Heart right ventricle (tissue), 16 donors: ENCODE measurements at regions of chr3 and their contacts with region 1.

Region 1: DNA sequence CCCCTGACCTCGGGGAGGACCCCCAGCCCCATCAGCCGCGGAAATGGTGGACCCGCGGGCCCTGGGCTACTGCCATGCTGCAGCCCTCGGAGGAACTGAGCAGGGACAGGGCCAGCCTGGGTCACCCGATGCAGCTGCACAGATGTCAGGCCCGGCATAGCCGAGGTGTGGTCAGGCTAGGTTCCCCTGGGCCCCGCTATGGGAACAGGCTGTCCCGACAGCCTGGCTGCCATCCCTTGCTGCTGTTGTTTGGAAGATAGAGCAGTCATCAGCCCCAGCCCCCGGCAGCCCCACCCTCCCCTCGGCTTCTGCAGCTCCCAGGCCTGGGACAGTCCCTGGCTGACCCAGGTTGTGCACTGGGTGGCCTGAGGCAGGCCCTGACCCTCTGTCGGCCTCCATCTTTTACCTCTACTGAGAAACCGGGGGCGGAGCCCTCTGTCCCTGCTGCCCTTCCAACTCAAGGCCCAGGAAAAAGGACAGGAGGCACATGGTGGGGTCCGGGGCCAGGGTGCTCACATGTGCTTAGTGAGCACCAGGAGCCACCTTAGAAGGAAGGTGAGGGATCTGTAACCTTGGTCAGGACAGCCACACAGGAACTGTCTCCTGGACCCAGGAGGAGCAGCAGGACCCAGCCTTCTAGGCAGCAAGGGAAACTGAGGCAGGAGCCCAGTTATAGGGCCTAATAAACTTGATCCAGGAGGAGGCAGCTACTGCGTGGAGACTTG is 31.5 kb upstream of the FBLN2 start:
- DNase-seq: peak; percentile 56 to 86
- ATAC-seq: peak; percentile 46 to 89 (median 80)
- H3K4me3 ChIP-seq: no peak overlapping the region
- H3K27ac ChIP-seq: peak overlapping the region in 9 of 10 donors; percentile 58 to 90 (median 79)
- H3K4me1 ChIP-seq: peaks cover 23 to 46% (median 33%) of the 10 kb centered on the region in 9 donors
- H3K27me3 ChIP-seq: no peaks in the 10 kb centered on the region
- CTCF ChIP-seq: no peak

Region 2: DNA sequence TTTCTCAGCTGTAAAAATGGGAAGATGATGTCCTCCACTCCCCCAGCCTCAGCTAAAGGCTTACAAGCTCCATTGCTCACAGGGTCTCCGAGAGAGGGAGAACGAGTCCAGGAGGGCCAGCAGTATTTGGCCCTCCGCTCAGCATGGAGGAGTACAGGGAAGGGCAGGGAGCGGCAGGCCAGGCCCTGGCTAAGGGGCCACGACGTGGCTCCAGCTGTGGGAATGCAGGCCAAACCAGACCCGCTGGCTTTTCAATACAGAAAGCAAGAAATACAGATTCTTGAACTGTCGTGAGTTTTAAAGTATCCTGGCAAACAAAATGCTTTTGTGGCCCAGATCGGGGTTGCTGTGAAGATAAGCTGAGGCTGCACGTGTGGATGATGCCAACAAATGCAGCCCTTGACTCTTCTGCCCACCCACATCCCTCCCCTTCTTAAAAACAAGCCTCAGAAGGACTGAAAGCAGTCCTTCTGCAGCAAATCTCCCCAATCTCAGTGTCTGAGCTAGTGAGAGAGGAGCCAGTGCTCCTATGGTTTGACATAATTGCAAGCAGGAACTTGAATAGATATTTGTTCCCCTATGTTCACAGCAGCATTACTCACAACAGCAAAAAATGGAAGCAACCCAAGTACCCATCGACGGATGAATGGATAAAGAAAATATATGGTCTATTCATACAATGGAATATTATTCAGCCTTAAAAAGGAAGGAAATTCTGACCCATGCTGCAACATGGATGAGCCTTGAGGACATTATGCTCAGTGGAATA is 13.0 kb after region 1 on chr3:
- intact Hi-C with region 1: loop called in 1 of 10 experiments (anchors 1 kb)
- DNase-seq: no peak
- ATAC-seq: no peak
- H3K4me3 ChIP-seq: no peak overlapping the region
- H3K27ac ChIP-seq: peak overlapping the region in 6 of 10 donors; percentile 9 to 55 (median 26)
- H3K4me1 ChIP-seq: peaks cover 0 to 45% (median 10%) of the 10 kb centered on the region in 9 donors
- H3K27me3 ChIP-seq: no peaks in the 10 kb centered on the region
- CTCF ChIP-seq: no peak

Region 3: DNA sequence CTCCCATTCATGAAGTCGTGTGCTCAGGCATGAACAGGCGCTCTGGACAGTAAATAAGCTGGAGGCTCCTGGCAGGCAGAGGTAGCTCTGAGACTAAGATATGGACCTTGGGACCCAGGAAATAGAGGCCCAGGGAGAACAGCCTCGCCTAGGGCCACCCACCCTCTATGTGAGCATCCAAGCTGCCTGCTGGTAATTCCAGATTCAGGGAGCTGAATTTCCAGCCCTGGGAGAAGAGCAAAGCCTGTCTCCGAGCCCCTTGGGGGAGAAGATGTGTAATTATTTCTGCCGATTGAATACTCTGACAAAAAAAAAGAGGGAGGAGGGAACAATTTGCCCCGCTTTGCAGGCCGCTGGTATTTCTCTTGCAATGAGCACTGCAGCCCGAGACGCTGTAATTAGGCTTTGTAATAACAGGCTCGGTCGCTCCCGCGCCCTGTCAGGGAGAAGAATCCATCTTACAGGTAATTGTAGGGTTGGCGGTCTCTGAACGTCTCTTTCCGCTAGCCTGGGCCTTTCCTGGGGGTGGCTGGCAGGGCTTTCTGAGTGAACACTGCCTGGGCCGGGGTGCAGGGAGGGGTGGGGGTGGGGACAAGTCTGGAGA is 231.0 kb after region 1 on chr3:
- intact Hi-C with region 1: no loop called
- DNase-seq: no peak
- ATAC-seq: no peak
- H3K4me3 ChIP-seq: no peak overlapping the region
- H3K27ac ChIP-seq: no peak overlapping the region
- H3K4me1 ChIP-seq: no peaks in the 10 kb centered on the region
- H3K27me3 ChIP-seq: peaks cover 0 to 22% (median 6%) of the 10 kb centered on the region in 7 donors
- CTCF ChIP-seq: no peak